ENCODE measurements at regions of chr7 and their contacts with region 1.

Region 1: GRCh38 chr7:105924945-105925344 is 38.1 kb upstream of the CDHR3 start:
- DNase-seq: peak; percentile 59
- ATAC-seq: peak; percentile 91
- H3K4me3 Mint-ChIP-seq: no peak overlapping the region
- H3K27ac Mint-ChIP-seq: peak overlapping the region; percentile 80
- H3K4me1 Mint-ChIP-seq: peaks cover 24% of the 10 kb centered on the region
- H3K27me3 Mint-ChIP-seq: peaks cover 3% of the 10 kb centered on the region

Region 2: DNA sequence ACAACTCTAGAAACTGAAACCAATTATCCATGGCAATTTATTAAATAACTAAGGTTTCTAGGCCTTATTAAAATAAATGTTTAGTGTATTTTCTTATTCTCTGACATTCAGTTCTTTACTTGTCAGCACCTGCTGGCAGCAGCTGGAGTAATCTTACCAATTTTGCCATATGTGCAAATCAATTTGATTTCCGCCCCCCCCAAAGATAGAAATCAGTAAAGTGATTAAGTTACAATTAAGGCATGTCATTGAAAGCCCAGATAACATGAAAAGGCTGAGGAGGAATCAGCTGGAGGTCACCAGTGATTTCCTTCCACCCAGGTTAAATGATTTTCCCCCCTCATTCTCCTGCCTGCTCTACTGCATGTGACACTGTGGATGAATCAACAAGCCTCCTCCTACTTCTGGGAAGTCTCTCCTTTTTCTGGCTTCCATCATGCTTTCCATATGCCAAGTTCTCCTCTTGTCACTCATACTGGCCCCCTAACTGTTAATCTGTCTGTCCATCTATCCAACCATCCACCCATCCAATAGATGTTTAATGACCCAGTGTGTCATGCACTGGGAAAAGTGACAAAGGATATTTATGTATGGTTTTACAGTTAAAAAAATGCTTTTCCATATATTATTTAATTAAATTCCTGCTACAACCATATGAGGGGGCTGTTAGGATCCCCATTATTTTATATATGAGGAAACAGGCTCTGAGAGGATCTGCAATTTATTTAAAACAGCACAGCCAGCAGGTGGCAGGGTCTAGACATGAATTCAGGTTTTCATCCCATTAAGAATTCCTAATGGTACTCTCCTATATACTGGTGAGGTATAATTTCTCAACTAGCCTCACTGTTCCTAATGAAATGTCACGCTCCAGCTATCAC is 165.0 kb before region 1 on chr7:
- CTCF ChIA-PET with region 1: interaction called, 10 read pairs
- POLR2A ChIA-PET with region 1: no interaction called
- intact Hi-C with region 1: loop called in 1 of 2 experiments (anchors 5 kb)
- DNase-seq: peak; percentile 47
- ATAC-seq: peak; percentile 20
- H3K4me3 Mint-ChIP-seq: no peak overlapping the region
- H3K27ac Mint-ChIP-seq: no peak overlapping the region
- H3K4me1 Mint-ChIP-seq: peaks cover 28% of the 10 kb centered on the region
- H3K27me3 Mint-ChIP-seq: no peaks in the 10 kb centered on the region

Region 3: GRCh38 chr7:105769901-105770628 is 154.9 kb before region 1 on chr7:
- CTCF ChIA-PET with region 1: interaction called, 4 read pairs
- POLR2A ChIA-PET with region 1: no interaction called
- intact Hi-C with region 1: loop called in 1 of 2 experiments (anchors 5 kb)
- DNase-seq: peak; percentile 53
- ATAC-seq: peak; percentile 70
- H3K4me3 Mint-ChIP-seq: no peak overlapping the region
- H3K27ac Mint-ChIP-seq: no peak overlapping the region
- H3K4me1 Mint-ChIP-seq: peaks cover 40% of the 10 kb centered on the region
- H3K27me3 Mint-ChIP-seq: no peaks in the 10 kb centered on the region

Region 4: GRCh38 chr7:105849122-105849855 is 75.7 kb before region 1 on chr7:
- CTCF ChIA-PET with region 1: no interaction called
- POLR2A ChIA-PET with region 1: no interaction called
- intact Hi-C with region 1: loop called in 1 of 2 experiments (anchors 2 kb)
- DNase-seq: peak; percentile 82
- ATAC-seq: peak; percentile 96
- H3K4me3 Mint-ChIP-seq: peak overlapping the region; percentile 32
- H3K27ac Mint-ChIP-seq: peak overlapping the region; percentile 59
- H3K4me1 Mint-ChIP-seq: peaks cover 52% of the 10 kb centered on the region
- H3K27me3 Mint-ChIP-seq: no peaks in the 10 kb centered on the region

Region 5: GRCh38 chr7:105885387-105886111 is 39.4 kb before region 1 on chr7:
- CTCF ChIA-PET with region 1: no interaction called
- POLR2A ChIA-PET with region 1: no interaction called
- intact Hi-C with region 1: loop called in 1 of 2 experiments (anchors 5 kb)
- DNase-seq: peak; percentile 21
- ATAC-seq: no peak
- H3K4me3 Mint-ChIP-seq: no peak overlapping the region
- H3K27ac Mint-ChIP-seq: no peak overlapping the region
- H3K4me1 Mint-ChIP-seq: peaks cover 28% of the 10 kb centered on the region
- H3K27me3 Mint-ChIP-seq: no peaks in the 10 kb centered on the region

Region 6: DNA sequence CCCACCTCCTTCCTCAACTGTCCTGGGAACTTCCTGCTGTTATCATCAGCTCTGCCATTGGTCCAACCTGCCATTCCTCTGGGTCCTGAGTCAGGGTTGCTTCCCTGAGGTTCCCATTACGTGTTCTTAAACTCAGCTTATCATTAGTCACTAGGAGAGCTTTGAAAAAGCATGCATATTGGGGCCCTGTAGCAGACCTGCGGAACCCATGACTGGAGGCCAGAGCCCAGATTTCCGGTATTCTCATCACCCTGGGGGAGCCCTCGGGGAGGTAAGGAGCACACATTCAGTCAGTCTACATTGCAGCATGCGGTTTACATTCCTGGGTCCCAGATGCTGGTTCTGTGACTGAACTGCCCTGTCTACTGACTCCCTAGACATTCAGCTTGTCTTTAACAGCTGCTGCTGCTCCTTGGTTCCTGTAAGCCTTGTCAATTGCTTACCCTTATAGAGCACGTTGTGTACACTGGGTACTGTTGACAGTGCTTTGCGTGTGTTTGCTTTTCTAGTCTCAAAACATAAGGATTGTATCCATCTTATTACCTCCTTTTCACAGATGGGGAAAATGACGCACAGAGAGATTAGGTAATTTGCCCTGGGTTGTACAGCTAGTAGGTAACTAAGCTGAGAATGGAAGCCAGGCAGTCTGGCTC is 51.0 kb after region 1 on chr7:
- CTCF ChIA-PET with region 1: no interaction called
- POLR2A ChIA-PET with region 1: no interaction called
- intact Hi-C with region 1: no loop called
- DNase-seq: no peak
- ATAC-seq: no peak
- H3K4me3 Mint-ChIP-seq: no peak overlapping the region
- H3K27ac Mint-ChIP-seq: no peak overlapping the region
- H3K4me1 Mint-ChIP-seq: no peaks in the 10 kb centered on the region
- H3K27me3 Mint-ChIP-seq: no peaks in the 10 kb centered on the region

Region 7: DNA sequence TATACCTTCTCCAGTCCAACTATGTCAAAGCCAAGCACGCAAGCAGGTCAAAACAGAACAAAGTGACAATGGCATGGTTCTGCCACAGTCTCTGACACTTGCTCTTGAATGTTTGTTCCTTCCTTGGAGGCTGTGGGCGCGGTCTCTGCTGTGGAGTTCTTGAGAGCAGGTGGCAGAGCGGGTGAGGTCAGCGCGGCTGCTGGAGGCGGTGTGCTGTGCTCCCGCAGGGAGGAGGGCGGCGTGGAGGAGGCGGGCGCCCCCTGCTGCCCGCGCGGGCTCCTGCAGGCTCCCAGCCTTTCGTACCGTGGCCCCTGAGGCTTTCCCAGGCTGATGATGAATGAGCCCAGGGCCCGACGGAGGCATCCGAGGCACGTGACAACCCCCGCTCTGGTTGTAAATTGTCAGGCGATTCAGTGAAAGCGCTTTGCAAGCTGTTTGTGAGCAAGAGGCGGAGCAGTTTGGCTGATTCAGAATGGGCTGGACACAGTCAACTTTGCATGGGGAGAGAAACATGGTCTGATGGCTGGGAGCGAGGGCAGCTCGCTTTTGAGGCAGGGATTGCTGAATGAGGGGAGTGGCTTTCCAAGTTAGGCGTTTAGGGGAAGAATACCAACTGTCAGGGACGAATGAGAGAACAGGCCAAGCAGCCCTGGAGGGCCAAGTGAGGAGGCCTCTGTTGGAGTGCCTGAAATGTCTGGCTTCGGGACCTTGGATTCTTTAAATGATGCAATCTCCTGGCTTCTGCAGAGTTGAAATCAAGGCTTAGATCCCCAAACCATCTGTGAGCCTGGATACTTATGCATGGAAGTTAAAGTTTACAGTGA is 84.7 kb after region 1 on chr7:
- CTCF ChIA-PET with region 1: no interaction called
- POLR2A ChIA-PET with region 1: no interaction called
- intact Hi-C with region 1: loop called (anchors 2 to 5 kb)
- DNase-seq: peak; percentile 92
- ATAC-seq: peak; percentile 99
- H3K4me3 Mint-ChIP-seq: no peak overlapping the region
- H3K27ac Mint-ChIP-seq: peak overlapping the region; percentile 4
- H3K4me1 Mint-ChIP-seq: peaks cover 21% of the 10 kb centered on the region
- H3K27me3 Mint-ChIP-seq: peaks cover 2% of the 10 kb centered on the region

Measured in activated CD4-positive, alpha-beta T cell treated with anti-CD3 and anti-CD28 coated beads for 36 hours (primary cell).